ENCODE measurements at regions of chr2 and their contacts with region 1.

Region 1: GRCh38 chr2:48717846-48718245 is 37.7 kb downstream of the LHCGR start:
- DNase-seq: no peak
- H3K4me3 ChIP-seq: no peak overlapping the region
- H3K27ac ChIP-seq: no peak overlapping the region
- H3K27me3 ChIP-seq: no peaks in the 10 kb centered on the region
- CTCF ChIP-seq: no peak

Region 2: GRCh38 chr2:48707470-48707869 is 10.4 kb before region 1 on chr2:
- CTCF ChIA-PET with region 1: no interaction called
- POLR2A ChIA-PET with region 1: no interaction called
- DNase-seq: no peak
- H3K4me3 ChIP-seq: no peak overlapping the region
- H3K27ac ChIP-seq: no peak overlapping the region
- H3K27me3 ChIP-seq: no peaks in the 10 kb centered on the region
- CTCF ChIP-seq: no peak

Region 3: DNA sequence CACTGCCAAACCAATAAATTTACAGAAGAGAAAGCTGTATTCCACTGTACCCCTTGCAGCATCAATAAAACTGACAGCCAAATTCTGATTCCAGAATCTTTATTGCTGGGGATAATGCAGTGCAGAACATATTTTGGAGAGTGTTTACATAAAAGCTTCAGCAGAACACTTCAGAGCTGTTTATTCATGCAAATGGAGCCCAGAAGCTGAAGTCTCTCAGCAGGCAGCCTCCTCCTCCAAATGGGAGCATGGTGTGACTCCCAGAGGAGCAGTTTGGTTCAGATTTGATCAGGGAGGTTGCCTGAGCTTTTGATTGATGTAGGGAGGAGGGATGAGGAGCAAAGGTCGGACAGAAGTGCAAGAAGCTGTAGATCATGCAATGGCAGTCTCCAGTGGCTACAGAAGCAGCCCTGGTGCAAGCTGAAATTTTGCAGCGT is 15.2 kb after region 1 on chr2:
- CTCF ChIA-PET with region 1: no interaction called
- POLR2A ChIA-PET with region 1: interaction called, 12 read pairs
- DNase-seq: no peak
- H3K4me3 ChIP-seq: no peak overlapping the region
- H3K27ac ChIP-seq: no peak overlapping the region
- H3K27me3 ChIP-seq: no peaks in the 10 kb centered on the region
- CTCF ChIP-seq: no peak

Region 4: DNA sequence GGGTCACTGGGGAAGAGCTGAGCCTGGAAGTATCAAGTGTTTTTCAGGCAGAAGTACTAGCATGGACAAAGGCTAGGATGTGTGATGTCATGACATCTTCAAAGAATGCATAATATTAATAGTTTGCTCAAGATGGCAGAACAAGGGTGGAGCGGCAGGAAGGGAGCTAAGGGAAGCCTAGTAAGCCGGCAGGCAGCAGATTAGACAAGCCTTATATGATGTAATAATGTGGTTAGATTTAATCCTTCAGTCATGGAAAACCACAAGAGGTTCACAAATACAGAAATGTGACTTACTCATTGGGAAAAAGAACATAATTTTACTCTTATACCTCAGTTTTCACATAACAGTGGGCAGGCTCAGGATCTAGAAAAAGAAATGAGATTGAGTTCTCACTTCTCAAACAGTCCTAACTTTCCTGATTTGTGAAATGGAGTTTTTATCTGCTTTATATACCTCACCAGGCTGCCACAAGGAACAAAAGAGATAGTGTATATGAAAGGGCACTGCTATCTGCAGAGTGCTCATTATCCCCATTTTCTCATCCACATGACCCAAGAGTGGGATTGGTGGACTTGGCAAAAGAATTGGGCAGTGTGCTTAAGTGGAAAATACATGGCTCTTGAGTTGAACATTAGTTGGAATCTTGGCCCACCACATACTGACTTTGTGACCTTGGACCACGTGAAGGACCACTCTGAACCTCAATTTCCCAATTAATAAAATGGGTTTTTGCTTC is 126.7 kb after region 1 on chr2:
- CTCF ChIA-PET with region 1: no interaction called
- POLR2A ChIA-PET with region 1: interaction called, 10 read pairs
- DNase-seq: peak; percentile 55
- H3K4me3 ChIP-seq: no peak overlapping the region
- H3K27ac ChIP-seq: peak overlapping the region; percentile 11
- H3K27me3 ChIP-seq: no peaks in the 10 kb centered on the region
- CTCF ChIP-seq: no peak